ENCODE measurements at regions of chr10 and their contacts with region 1.

Region 1: GRCh38 chr10:103507235-103508191 is 14.0 kb downstream of the NEURL1 start:
- DNase-seq: peak; percentile 45

Region 2: GRCh38 chr10:103367782-103368518 is 139.6 kb before region 1 on chr10 and contains the start of gene TAF5:
- intact Hi-C with region 1: no loop called
- DNase-seq: peak; percentile 97
- total RNA-seq, gene TAF5: 2.1 to 2.4 TPM

Region 3: GRCh38 chr10:103578782-103579382 is 71.4 kb after region 1 on chr10:
- intact Hi-C with region 1: loop called in 1 of 2 experiments (anchors 2 kb)
- DNase-seq: no peak

Measured in posterior vena cava (tissue), 2 donors.